ENCODE measurements at regions of chr15 and their contacts with region 1.

Region 1: GRCh38 chr15:59917504-59918157 is 86.5 kb upstream of the FOXB1 start:
- DNase-seq: peak; percentile 31 to 67 (median 54)
- ATAC-seq: peak; percentile 90
- H3K4me3 ChIP-seq: no peak overlapping the region
- H3K4me3 Mint-ChIP-seq: peak overlapping the region in 1 of 10 donors; percentile 33
- H3K27ac ChIP-seq: no peak overlapping the region
- H3K27ac Mint-ChIP-seq: peak overlapping the region in 4 of 9 donors; percentile 31 to 51 (median 37)
- H3K4me1 ChIP-seq: peaks cover 0 to 11% of the 10 kb centered on the region in 2 donors
- H3K4me1 Mint-ChIP-seq: peaks cover 6 to 29% (median 25%) of the 10 kb centered on the region in 7 donors
- H3K27me3 ChIP-seq: peaks cover 0 to 5% of the 10 kb centered on the region in 2 donors
- H3K27me3 Mint-ChIP-seq: peaks cover 0 to 30% (median 8%) of the 10 kb centered on the region in 5 donors

Region 2: GRCh38 chr15:59976480-59977271 is 59.0 kb after region 1 on chr15:
- CTCF ChIA-PET with region 1: no interaction called
- POLR2A ChIA-PET with region 1: interaction called, 3 read pairs
- intact Hi-C with region 1: loop called (anchors 1 to 2 kb)
- DNase-seq: peak in 8 of 9 donors; percentile 38 to 90 (median 86)
- ATAC-seq: peak; percentile 98
- H3K4me3 ChIP-seq: no peak overlapping the region
- H3K4me3 Mint-ChIP-seq: peak overlapping the region; percentile 12 to 83 (median 70)
- H3K27ac ChIP-seq: no peak overlapping the region
- H3K27ac Mint-ChIP-seq: peak overlapping the region in 8 of 9 donors; percentile 60 to 80 (median 74)
- H3K4me1 ChIP-seq: peaks cover 21 to 23% of the 10 kb centered on the region in 2 donors
- H3K4me1 Mint-ChIP-seq: peaks cover 13 to 43% (median 38%) of the 10 kb centered on the region in 7 donors
- H3K27me3 ChIP-seq: no peaks in the 10 kb centered on the region
- H3K27me3 Mint-ChIP-seq: peaks cover 0 to 27% (median 0%) of the 10 kb centered on the region in 5 donors

Region 3: DNA sequence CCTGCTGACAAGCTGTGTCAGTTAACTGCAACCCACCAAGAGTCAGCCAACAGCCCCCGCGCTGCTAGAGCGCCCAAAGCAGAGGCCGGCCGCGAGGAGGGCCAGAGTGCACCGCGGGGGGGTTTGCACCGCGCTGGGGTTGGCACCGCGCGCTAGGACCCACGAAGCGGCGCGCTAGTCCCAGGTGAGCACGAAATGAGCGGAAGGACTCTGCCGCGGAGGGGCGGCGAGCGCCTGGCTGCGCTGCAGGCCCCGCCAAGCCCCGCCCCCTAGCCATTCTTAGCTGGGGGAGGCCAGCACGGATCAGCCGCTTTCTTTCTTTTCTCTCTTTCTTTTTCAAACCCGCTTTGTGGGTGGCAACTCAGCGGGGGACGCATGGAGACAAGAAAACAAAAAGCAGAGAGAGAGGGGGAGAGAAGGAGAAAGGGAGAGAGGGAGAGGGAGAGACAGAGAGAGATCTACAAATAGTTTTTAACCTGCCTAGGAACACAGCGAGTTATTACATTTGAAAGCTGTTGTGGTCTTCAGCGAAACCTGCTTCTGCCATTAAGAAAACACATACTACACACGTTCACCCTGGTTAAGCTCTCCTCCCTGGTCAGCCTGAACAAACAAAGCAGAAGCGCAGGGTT is 79.6 kb after region 1 on chr15:
- CTCF ChIA-PET with region 1: no interaction called
- POLR2A ChIA-PET with region 1: no interaction called
- intact Hi-C with region 1: loop called in 1 of 2 experiments (anchors 2 kb)
- DNase-seq: peak in 5 of 9 donors; percentile 34 to 74 (median 51)
- ATAC-seq: peak; percentile 70
- H3K4me3 ChIP-seq: no peak overlapping the region
- H3K4me3 Mint-ChIP-seq: peak overlapping the region; percentile 32 to 82 (median 48)
- H3K27ac ChIP-seq: no peak overlapping the region
- H3K27ac Mint-ChIP-seq: peak overlapping the region in 2 of 9 donors; percentile 10 to 69
- H3K4me1 ChIP-seq: peaks cover 7 to 19% of the 10 kb centered on the region in 2 donors
- H3K4me1 Mint-ChIP-seq: peaks cover 24 to 73% (median 48%) of the 10 kb centered on the region in 7 donors
- H3K27me3 ChIP-seq: peaks cover 41 to 85% of the 10 kb centered on the region in 2 donors
- H3K27me3 Mint-ChIP-seq: peaks cover 87 to 98% (median 93%) of the 10 kb centered on the region in 5 donors

Region 4: GRCh38 chr15:60179786-60180391 is 262.3 kb after region 1 on chr15:
- CTCF ChIA-PET with region 1: interaction called, 6 read pairs
- POLR2A ChIA-PET with region 1: no interaction called
- intact Hi-C with region 1: loop called (anchors 1 kb)
- DNase-seq: peak in 7 of 9 donors; percentile 19 to 52 (median 41)
- ATAC-seq: peak; percentile 73
- H3K4me3 ChIP-seq: no peak overlapping the region
- H3K4me3 Mint-ChIP-seq: no peak overlapping the region
- H3K27ac ChIP-seq: no peak overlapping the region
- H3K27ac Mint-ChIP-seq: no peak overlapping the region
- H3K4me1 ChIP-seq: no peaks in the 10 kb centered on the region
- H3K4me1 Mint-ChIP-seq: no peaks in the 10 kb centered on the region
- H3K27me3 ChIP-seq: no peaks in the 10 kb centered on the region
- H3K27me3 Mint-ChIP-seq: peaks cover 2 to 49% (median 9%) of the 10 kb centered on the region in 5 donors

Region 5: GRCh38 chr15:60326824-60327654 is 409.4 kb after region 1 on chr15:
- CTCF ChIA-PET with region 1: interaction called, 4 read pairs
- POLR2A ChIA-PET with region 1: no interaction called
- intact Hi-C with region 1: loop called in 1 of 2 experiments (anchors 1 kb)
- DNase-seq: peak in 7 of 9 donors; percentile 24 to 62 (median 56)
- ATAC-seq: peak; percentile 60
- H3K4me3 ChIP-seq: no peak overlapping the region
- H3K4me3 Mint-ChIP-seq: no peak overlapping the region
- H3K27ac ChIP-seq: no peak overlapping the region
- H3K27ac Mint-ChIP-seq: peak overlapping the region in 1 of 9 donors; percentile 2
- H3K4me1 ChIP-seq: no peaks in the 10 kb centered on the region
- H3K4me1 Mint-ChIP-seq: peaks cover 0 to 14% (median 4%) of the 10 kb centered on the region in 7 donors
- H3K27me3 ChIP-seq: peaks cover 0 to 10% of the 10 kb centered on the region in 2 donors
- H3K27me3 Mint-ChIP-seq: peaks cover 19 to 71% (median 35%) of the 10 kb centered on the region in 5 donors

Region 6: GRCh38 chr15:60397772-60398445 is 480.3 kb after region 1 on chr15 and contains the start of gene ANXA2:
- CTCF ChIA-PET with region 1: no interaction called
- POLR2A ChIA-PET with region 1: no interaction called
- intact Hi-C with region 1: loop called in 1 of 2 experiments (anchors 5 kb)
- DNase-seq: peak; percentile 49 to 85 (median 62)
- ATAC-seq: peak; percentile 81
- H3K4me3 ChIP-seq: peak within 1 kb of the TSS; percentile 72
- H3K4me3 Mint-ChIP-seq: peak within 1 kb of the TSS; percentile 83 to 98 (median 87)
- H3K27ac ChIP-seq: peak within 1 kb of the TSS; percentile 61
- H3K27ac Mint-ChIP-seq: peak within 1 kb of the TSS; percentile 87 to 98 (median 95)
- H3K4me1 ChIP-seq: peaks cover 6 to 32% of the 10 kb centered on the region in 2 donors
- H3K4me1 Mint-ChIP-seq: peaks cover 10 to 67% (median 33%) of the 10 kb centered on the region in 7 donors
- H3K27me3 ChIP-seq: no peaks in the 10 kb centered on the region
- H3K27me3 Mint-ChIP-seq: peaks cover 0 to 7% (median 0%) of the 10 kb centered on the region in 5 donors
- total RNA-seq, gene ANXA2: 28.8 to 377 (median 42.4) TPM